Endothelial cell of umbilical vein (primary cell): ENCODE measurements at regions of chr1 and their contacts with region 1.

Region 1: GRCh38 chr1:159071970-159072582 is 4.5 kb downstream of the AIM2 start:
- DNase-seq: peak; percentile 66
- H3K4me3 ChIP-seq: no peak overlapping the region
- H3K27ac ChIP-seq: no peak overlapping the region
- H3K4me1 ChIP-seq: peaks cover 8% of the 10 kb centered on the region
- H3K27me3 ChIP-seq: peaks cover 11 to 14% of the 10 kb centered on the region in 2 experiments
- CTCF ChIP-seq: peak; percentile 50 to 57
- POLR2A ChIP-seq: no peak

Region 2: GRCh38 chr1:157963713-157964112 is 1108.4 kb before region 1 on chr1:
- CTCF ChIA-PET with region 1: no interaction called
- POLR2A ChIA-PET with region 1: no interaction called
- dilution Hi-C with region 1: no loop called
- intact Hi-C with region 1: loop called (anchors 1 kb)
- DNase-seq: peak; percentile 63
- H3K4me3 ChIP-seq: no peak overlapping the region
- H3K27ac ChIP-seq: no peak overlapping the region
- H3K4me1 ChIP-seq: peaks cover 7% of the 10 kb centered on the region
- H3K27me3 ChIP-seq: peaks cover 10 to 18% of the 10 kb centered on the region in 2 experiments
- CTCF ChIP-seq: peak; percentile 76 to 78
- POLR2A ChIP-seq: no peak

Region 3: GRCh38 chr1:158506369-158506987 is 565.6 kb before region 1 on chr1:
- CTCF ChIA-PET with region 1: interaction called, 34 read pairs
- POLR2A ChIA-PET with region 1: no interaction called
- dilution Hi-C with region 1: no loop called
- intact Hi-C with region 1: loop called (anchors 1 kb)
- DNase-seq: peak; percentile 43
- H3K4me3 ChIP-seq: no peak overlapping the region
- H3K27ac ChIP-seq: no peak overlapping the region
- H3K4me1 ChIP-seq: no peaks in the 10 kb centered on the region
- H3K27me3 ChIP-seq: peaks cover 0 to 1% of the 10 kb centered on the region in 2 experiments
- CTCF ChIP-seq: peak; percentile 25 to 60
- POLR2A ChIP-seq: no peak

Region 4: DNA sequence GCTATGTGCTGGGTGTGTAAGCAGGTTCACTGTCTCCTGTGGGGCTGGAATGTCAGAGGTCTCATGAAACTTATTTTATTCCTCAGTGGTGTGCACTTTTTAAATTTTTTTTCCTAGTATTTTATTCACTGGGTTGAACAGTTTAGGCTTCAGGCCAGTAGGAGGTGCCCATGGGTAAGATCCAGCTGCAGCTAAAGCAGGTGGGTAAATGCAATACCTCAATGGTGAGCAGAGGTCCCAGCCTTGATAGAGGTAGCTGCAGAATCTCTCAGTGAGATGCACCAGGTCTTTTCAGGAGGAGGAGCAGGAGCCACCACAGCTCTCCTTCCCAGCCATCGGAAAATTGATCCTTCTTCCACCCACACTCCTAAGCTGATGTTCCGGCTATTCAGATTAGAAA is 278.5 kb before region 1 on chr1:
- CTCF ChIA-PET with region 1: interaction called, 4 read pairs
- POLR2A ChIA-PET with region 1: no interaction called
- dilution Hi-C with region 1: no loop called
- intact Hi-C with region 1: loop called (anchors 5 kb)
- DNase-seq: peak; percentile 2
- H3K4me3 ChIP-seq: no peak overlapping the region
- H3K27ac ChIP-seq: no peak overlapping the region
- H3K4me1 ChIP-seq: no peaks in the 10 kb centered on the region
- H3K27me3 ChIP-seq: no peaks in the 10 kb centered on the region
- CTCF ChIP-seq: peak in 1 of 2 donors; percentile 14
- POLR2A ChIP-seq: no peak

Region 5: DNA sequence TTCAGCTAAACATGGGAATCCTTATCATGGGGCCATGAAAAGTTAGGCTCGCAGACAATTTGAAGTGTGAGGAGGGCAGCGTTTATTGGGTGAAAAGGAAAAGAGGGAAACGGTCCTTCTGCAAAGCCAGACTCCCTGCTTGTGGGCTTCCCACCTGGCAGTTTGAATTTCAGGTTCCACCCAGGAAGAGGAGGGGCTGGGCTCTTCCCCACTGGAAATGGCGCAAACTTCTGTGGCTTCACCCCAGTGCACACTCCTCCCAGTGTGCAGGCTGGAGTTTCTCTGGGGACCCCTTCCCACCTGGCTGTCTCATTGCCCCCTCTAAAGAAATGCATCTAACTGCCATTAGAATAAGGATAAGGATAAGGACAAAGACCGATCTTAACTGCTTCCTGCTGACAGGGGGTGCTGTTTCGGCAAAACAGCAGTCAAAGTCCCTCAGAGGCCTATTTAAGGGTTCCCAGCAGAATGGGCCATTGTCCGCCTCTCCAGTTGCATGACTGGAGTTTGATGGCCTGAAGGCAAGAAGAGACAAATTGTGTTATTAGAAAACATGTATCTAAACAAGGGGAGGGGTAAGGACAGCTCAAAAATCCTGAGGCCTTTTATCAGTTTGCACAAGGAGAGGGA is 15.9 kb before region 1 on chr1:
- CTCF ChIA-PET with region 1: interaction called, 12 read pairs
- POLR2A ChIA-PET with region 1: no interaction called
- dilution Hi-C with region 1: no loop called
- intact Hi-C with region 1: no loop called
- DNase-seq: no peak
- H3K4me3 ChIP-seq: no peak overlapping the region
- H3K27ac ChIP-seq: no peak overlapping the region
- H3K4me1 ChIP-seq: peaks cover 7% of the 10 kb centered on the region
- H3K27me3 ChIP-seq: no peaks in the 10 kb centered on the region
- CTCF ChIP-seq: peak in 1 of 2 donors; percentile 12
- POLR2A ChIP-seq: no peak